Activated CD8-positive, alpha-beta memory T cell treated with anti-CD3 and anti-CD28 coated beads, Interleukin-2, amount 10 ng/mL, durations not matched to agents 7 days and 5 days (primary cell): ENCODE measurements at regions of chr19 and their contacts with region 1.

Region 1: DNA sequence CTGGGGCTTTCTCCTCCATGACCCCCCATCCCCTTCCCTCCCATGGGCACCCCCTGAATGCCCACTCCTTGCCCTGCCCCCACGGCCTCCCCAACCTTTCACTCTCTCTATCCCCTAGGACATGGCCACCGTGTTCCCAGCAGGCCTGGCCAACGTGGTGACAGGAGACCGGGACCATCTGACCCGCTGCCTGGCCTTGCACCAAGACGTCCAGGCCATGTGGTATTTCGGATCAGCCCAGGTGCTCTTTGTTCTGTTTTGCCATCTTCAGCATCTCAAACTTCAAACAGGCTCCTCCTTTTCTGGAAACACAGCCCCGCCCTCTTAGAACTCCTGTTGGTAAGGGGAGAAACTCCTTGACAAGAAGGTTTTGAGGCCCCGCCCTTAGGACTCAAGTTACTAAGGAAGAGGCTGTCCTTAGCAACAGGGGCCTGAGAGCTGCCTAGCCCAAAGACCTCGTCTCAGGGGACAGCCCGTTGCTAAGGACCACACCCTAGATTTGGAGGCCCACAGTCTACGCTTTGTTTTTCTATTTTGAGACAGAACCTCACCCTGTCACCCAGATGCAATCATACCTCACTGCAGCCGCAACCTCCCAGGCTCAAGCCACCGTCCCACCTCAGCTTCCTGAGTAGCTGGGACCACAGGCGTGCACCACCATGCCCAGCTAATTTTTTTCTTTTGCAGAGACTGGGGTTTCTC is 5.1 kb upstream of the FLT3LG start:
- DNase-seq: peak; percentile 98
- ATAC-seq: peak; percentile 78
- H3K4me3 Mint-ChIP-seq: peak overlapping the region; percentile 69
- H3K27ac Mint-ChIP-seq: peak overlapping the region; percentile 99
- H3K4me1 Mint-ChIP-seq: peaks cover 52% of the 10 kb centered on the region
- H3K27me3 Mint-ChIP-seq: no peaks in the 10 kb centered on the region

Region 2: GRCh38 chr19:49443366-49444099 is 25.4 kb before region 1 on chr19:
- CTCF ChIA-PET with region 1: interaction called, 185 read pairs
- DNase-seq: peak; percentile 96
- ATAC-seq: peak; percentile 85
- H3K4me3 Mint-ChIP-seq: peak overlapping the region; percentile 78
- H3K27ac Mint-ChIP-seq: peak overlapping the region; percentile 80
- H3K4me1 Mint-ChIP-seq: peaks cover 51% of the 10 kb centered on the region
- H3K27me3 Mint-ChIP-seq: peaks cover 36% of the 10 kb centered on the region

Region 3: GRCh38 chr19:49492573-49493405 is 23.9 kb after region 1 on chr19:
- CTCF ChIA-PET with region 1: interaction called, 12 read pairs
- DNase-seq: no peak
- ATAC-seq: no peak
- H3K4me3 Mint-ChIP-seq: no peak overlapping the region
- H3K27ac Mint-ChIP-seq: peak overlapping the region; percentile 78
- H3K4me1 Mint-ChIP-seq: peaks cover 62% of the 10 kb centered on the region
- H3K27me3 Mint-ChIP-seq: no peaks in the 10 kb centered on the region

Region 4: GRCh38 chr19:49560358-49560900 is 91.5 kb after region 1 on chr19:
- CTCF ChIA-PET with region 1: no interaction called
- DNase-seq: peak; percentile 60
- ATAC-seq: peak; percentile 40
- H3K4me3 Mint-ChIP-seq: peak overlapping the region; percentile 64
- H3K27ac Mint-ChIP-seq: peak overlapping the region; percentile 88
- H3K4me1 Mint-ChIP-seq: peaks cover 70% of the 10 kb centered on the region
- H3K27me3 Mint-ChIP-seq: no peaks in the 10 kb centered on the region

Region 5: GRCh38 chr19:49624967-49625910 is 156.3 kb after region 1 on chr19:
- CTCF ChIA-PET with region 1: no interaction called
- DNase-seq: no peak
- ATAC-seq: peak; percentile 15
- H3K4me3 Mint-ChIP-seq: no peak overlapping the region
- H3K27ac Mint-ChIP-seq: no peak overlapping the region
- H3K4me1 Mint-ChIP-seq: no peaks in the 10 kb centered on the region
- H3K27me3 Mint-ChIP-seq: no peaks in the 10 kb centered on the region